ENCODE measurements at regions of chr10 and their contacts with region 1.

Region 1: GRCh38 chr10:6050801-6051445 is 11.2 kb downstream of the IL2RA start:
- DNase-seq: peak; percentile 62 to 98 (median 90)
- ATAC-seq: peak; percentile 92
- H3K4me3 ChIP-seq: peak overlapping the region; percentile 49
- H3K4me3 Mint-ChIP-seq: peak overlapping the region; percentile 78 to 98 (median 92)
- H3K27ac ChIP-seq: peak overlapping the region; percentile 79
- H3K27ac Mint-ChIP-seq: peak overlapping the region; percentile 94 to 99 (median 97)
- H3K4me1 ChIP-seq: peaks cover 52 to 54% of the 10 kb centered on the region in 2 donors
- H3K4me1 Mint-ChIP-seq: peaks cover 54 to 90% (median 85%) of the 10 kb centered on the region in 7 donors
- H3K27me3 ChIP-seq: no peaks in the 10 kb centered on the region
- H3K27me3 Mint-ChIP-seq: no peaks in the 10 kb centered on the region

Region 2: GRCh38 chr10:5274795-5275194 is 776.1 kb before region 1 on chr10:
- CTCF ChIA-PET with region 1: no interaction called
- POLR2A ChIA-PET with region 1: no interaction called
- intact Hi-C with region 1: no loop called
- DNase-seq: no peak
- ATAC-seq: peak; percentile 34
- H3K4me3 ChIP-seq: no peak overlapping the region
- H3K4me3 Mint-ChIP-seq: no peak overlapping the region
- H3K27ac ChIP-seq: no peak overlapping the region
- H3K27ac Mint-ChIP-seq: no peak overlapping the region
- H3K4me1 ChIP-seq: no peaks in the 10 kb centered on the region
- H3K4me1 Mint-ChIP-seq: peaks cover 3 to 25% (median 6%) of the 10 kb centered on the region in 7 donors
- H3K27me3 ChIP-seq: no peaks in the 10 kb centered on the region
- H3K27me3 Mint-ChIP-seq: peaks cover 0 to 20% (median 0%) of the 10 kb centered on the region in 5 donors

Region 3: DNA sequence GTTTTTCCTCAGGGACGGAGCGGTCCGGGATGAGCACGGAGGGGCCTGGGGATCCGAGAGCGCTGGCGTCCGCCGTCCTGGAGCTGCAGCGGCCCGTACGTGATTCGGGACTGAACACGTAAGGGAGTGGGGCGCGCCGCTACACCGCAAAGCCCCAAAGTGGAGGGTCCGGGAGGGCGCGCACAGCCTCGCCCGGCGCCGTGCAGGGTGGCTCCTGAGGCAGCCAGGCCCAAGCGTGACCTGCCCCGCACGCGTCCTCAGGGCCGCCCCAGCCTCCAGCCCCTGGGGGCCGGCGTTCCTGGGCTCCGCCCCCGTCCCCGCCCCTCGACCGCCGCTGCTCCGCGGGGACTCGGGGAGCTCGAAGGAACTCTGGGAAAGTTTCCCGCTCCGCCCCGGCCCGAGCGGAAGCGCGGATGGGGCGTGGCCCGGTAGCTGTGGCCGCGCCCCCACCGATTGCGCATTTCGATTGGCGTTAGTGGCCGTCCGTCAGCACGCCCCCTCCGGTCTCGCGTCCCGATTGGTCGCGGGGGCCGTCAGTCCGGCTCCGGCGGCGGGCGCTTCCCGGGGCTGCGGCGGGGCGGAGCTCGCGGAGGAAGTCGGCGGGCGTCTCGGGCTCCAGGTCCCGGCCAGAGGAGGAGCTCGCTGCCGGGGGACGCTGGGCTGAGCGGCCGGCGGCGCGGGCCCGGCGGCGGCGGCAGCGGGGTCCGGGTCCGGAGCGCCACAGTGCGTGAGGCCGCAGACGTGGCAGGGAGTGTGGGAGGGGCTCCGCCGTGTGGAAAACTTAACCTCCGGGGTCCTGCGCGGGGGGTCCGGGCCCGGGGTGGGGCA is 161.1 kb before region 1 on chr10 and contains the starts of genes ANKRD16 and FBH1:
- CTCF ChIA-PET with region 1: no interaction called
- POLR2A ChIA-PET with region 1: interaction called, 3 read pairs
- intact Hi-C with region 1: loop called in 1 of 2 experiments (anchors 1 kb)
- DNase-seq: peak; percentile 94 to 100 (median 96)
- ATAC-seq: peak; percentile 96
- H3K4me3 ChIP-seq: peak within 1 kb of the TSS; percentile 70
- H3K4me3 Mint-ChIP-seq: peak within 1 kb of the TSS; percentile 90 to 97 (median 94)
- H3K27ac ChIP-seq: peak within 1 kb of the TSS; percentile 81
- H3K27ac Mint-ChIP-seq: peak within 1 kb of the TSS; percentile 80 to 94 (median 87)
- H3K4me1 ChIP-seq: peaks cover 12% of the 10 kb centered on the region in 2 donors
- H3K4me1 Mint-ChIP-seq: peaks cover 34 to 64% (median 60%) of the 10 kb centered on the region in 7 donors
- H3K27me3 ChIP-seq: no peaks in the 10 kb centered on the region
- H3K27me3 Mint-ChIP-seq: no peaks in the 10 kb centered on the region
- total RNA-seq, gene ANKRD16: 4.6 to 9.8 (median 7.2) TPM
- total RNA-seq, gene FBH1: 64.8 to 105 (median 78.6) TPM

Region 4: DNA sequence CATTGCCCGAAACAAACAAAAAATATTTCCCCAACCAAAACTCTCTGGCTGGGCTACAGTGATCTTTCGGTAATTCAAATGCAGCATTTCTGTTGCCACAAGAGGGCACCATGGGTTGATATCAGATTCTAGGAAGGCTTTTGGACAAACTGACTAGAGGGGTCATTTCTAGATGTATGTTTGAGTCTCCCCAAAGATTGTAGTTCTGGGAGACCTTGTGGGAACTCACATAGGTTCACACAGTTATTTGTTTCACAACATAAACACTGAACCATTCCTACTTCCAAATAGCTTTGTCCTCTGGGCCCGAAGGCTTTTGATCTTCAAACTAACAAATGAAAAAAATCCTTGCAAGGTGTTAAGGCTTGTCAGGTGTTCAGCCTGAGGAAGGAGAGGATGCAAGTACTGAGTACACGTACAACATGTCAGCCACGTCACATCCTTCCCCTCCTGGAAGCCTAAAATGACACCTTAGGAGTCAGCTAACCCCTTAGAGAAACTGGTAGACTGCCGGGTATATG is 36.6 kb before region 1 on chr10:
- CTCF ChIA-PET with region 1: interaction called, 27 read pairs
- POLR2A ChIA-PET with region 1: interaction called, 21 read pairs
- intact Hi-C with region 1: loop called (anchors 1 kb)
- DNase-seq: peak in 7 of 9 donors; percentile 73 to 89 (median 86)
- ATAC-seq: peak; percentile 98
- H3K4me3 ChIP-seq: no peak overlapping the region
- H3K4me3 Mint-ChIP-seq: peak overlapping the region in 9 of 10 donors; percentile 5 to 61 (median 36)
- H3K27ac ChIP-seq: peak overlapping the region; percentile 82
- H3K27ac Mint-ChIP-seq: peak overlapping the region; percentile 85 to 99 (median 96)
- H3K4me1 ChIP-seq: peaks cover 9 to 15% of the 10 kb centered on the region in 2 donors
- H3K4me1 Mint-ChIP-seq: peaks cover 3 to 55% (median 25%) of the 10 kb centered on the region in 7 donors
- H3K27me3 ChIP-seq: no peaks in the 10 kb centered on the region
- H3K27me3 Mint-ChIP-seq: no peaks in the 10 kb centered on the region

Region 5: DNA sequence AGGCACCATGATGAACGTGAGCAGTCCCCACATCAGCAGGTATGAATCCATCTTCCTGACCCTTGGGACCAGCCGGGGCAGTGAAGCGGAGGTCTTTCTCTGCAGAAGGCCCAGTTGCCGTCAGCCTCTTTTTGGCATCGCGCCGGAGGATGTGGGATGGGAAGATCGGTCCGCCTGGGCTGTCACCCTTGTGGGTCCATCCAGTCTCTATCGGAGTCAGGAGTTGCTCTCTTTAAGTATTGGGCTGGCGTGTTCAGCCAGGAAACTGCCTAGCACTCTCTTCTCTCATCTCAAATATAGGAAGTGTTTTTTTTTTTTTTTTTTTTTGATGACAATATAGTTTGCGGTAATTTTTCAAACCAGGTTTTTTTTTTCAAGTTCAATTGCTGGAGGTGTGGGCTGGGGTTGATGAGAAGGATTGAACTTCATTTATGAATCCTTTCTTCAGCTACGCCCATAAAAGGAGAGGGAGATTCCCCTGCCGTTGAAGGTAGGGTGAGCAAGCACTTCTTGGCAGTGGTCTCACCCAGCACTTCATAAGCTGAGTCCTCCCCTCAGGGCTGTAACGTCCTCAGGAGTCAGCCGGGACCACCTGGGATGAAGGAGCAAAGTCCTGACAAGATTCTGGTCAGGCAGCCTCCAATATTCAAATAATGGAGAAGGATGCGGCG is 11.3 kb after region 1 on chr10 and contains the start of gene IL2RA:
- CTCF ChIA-PET with region 1: interaction called, 20 read pairs
- POLR2A ChIA-PET with region 1: interaction called, 88 read pairs
- intact Hi-C with region 1: loop called (anchors 1 kb)
- DNase-seq: peak in 8 of 9 donors; percentile 57 to 79 (median 74)
- ATAC-seq: peak; percentile 92
- H3K4me3 ChIP-seq: peak within 1 kb of the TSS; percentile 54
- H3K4me3 Mint-ChIP-seq: peak within 1 kb of the TSS; percentile 77 to 91 (median 86)
- H3K27ac ChIP-seq: peak within 1 kb of the TSS; percentile 70
- H3K27ac Mint-ChIP-seq: peak within 1 kb of the TSS; percentile 75 to 94 (median 85)
- H3K4me1 ChIP-seq: peaks cover 16 to 27% of the 10 kb centered on the region in 2 donors
- H3K4me1 Mint-ChIP-seq: peaks cover 43 to 82% (median 71%) of the 10 kb centered on the region in 7 donors
- H3K27me3 ChIP-seq: no peaks in the 10 kb centered on the region
- H3K27me3 Mint-ChIP-seq: no peaks in the 10 kb centered on the region
- total RNA-seq, gene IL2RA: 2.5 to 266 (median 6.7) TPM

Region 6: GRCh38 chr10:6083523-6084475 is 32.9 kb after region 1 on chr10:
- CTCF ChIA-PET with region 1: interaction called, 52 read pairs
- POLR2A ChIA-PET with region 1: interaction called, 27 read pairs
- intact Hi-C with region 1: loop called (anchors 1 kb)
- DNase-seq: peak in 8 of 9 donors; percentile 45 to 71 (median 62)
- ATAC-seq: peak; percentile 36
- H3K4me3 ChIP-seq: peak overlapping the region; percentile 0
- H3K4me3 Mint-ChIP-seq: peak overlapping the region; percentile 51 to 90 (median 73)
- H3K27ac ChIP-seq: no peak overlapping the region
- H3K27ac Mint-ChIP-seq: peak overlapping the region; percentile 9 to 92 (median 80)
- H3K4me1 ChIP-seq: peaks cover 17 to 37% of the 10 kb centered on the region in 2 donors
- H3K4me1 Mint-ChIP-seq: peaks cover 30 to 67% (median 56%) of the 10 kb centered on the region in 7 donors
- H3K27me3 ChIP-seq: no peaks in the 10 kb centered on the region
- H3K27me3 Mint-ChIP-seq: no peaks in the 10 kb centered on the region